Right cardiac atrium (tissue), 5 donors: ENCODE measurements at regions of chr16 and their contacts with region 1.

Region 1: GRCh38 chr16:82229796-82230619 is 60.0 kb upstream of the MPHOSPH6 start:
- DNase-seq: peak; percentile 65 to 78 (median 69)
- ATAC-seq: peak in 1 of 2 donors; percentile 69
- H3K4me3 ChIP-seq: no peak overlapping the region
- H3K27ac ChIP-seq: no peak overlapping the region
- H3K4me1 ChIP-seq: no peaks in the 10 kb centered on the region
- H3K27me3 ChIP-seq: no peaks in the 10 kb centered on the region

Region 2: GRCh38 chr16:81940781-81941560 is 289.0 kb before region 1 on chr16:
- intact Hi-C with region 1: loop called in 2 of 4 experiments (anchors 5 to 10 kb)
- DNase-seq: no peak
- ATAC-seq: peak in 1 of 2 donors; percentile 32
- H3K4me3 ChIP-seq: no peak overlapping the region
- H3K27ac ChIP-seq: no peak overlapping the region
- H3K4me1 ChIP-seq: no peaks in the 10 kb centered on the region
- H3K27me3 ChIP-seq: no peaks in the 10 kb centered on the region

Region 3: DNA sequence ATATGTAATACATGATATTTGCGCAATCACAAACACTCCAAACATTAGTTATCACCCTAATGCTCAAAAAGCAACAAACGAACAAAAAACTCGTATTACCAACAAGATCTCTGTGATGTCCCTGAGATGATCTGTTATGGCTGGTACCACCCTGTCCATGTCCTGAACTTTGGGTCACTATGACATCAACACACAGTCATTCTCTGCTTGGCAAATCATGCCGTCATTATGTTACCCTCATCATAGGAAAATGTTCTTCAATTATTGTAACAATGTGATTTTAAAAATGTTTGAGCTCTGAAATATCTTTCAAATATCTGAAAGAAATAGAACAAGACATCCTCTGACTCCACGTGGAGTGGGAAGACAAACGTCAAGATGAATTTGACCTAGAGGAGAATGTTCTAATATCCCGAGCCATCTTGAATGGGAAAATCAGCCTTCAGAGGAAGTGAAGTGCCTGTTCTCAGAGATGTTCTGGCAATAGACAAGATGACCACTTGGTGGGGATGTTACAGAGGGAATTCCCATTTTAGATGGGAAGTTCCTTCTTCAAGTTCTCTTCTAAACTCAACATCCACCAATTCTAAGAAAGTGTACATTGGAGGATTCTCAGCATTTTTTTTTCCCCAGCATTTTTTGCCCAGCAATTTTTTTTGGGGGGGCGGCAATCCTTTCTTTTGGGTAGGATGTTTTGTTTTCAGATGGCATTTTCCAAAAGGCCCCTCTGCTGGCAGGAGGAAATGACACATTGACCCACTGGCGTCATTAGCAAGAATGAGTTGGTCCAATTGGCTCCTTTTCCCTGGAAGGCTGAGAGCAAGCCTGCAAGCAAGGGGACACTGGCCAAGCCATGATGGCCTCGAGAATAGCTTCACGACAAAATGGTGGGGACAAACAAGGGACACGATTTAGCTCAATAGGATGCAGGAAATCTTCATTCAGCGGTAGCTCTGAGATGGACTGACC is 198.6 kb before region 1 on chr16:
- intact Hi-C with region 1: loop called in 2 of 4 experiments (anchors 2 to 5 kb)
- DNase-seq: no peak
- ATAC-seq: no peak
- H3K4me3 ChIP-seq: no peak overlapping the region
- H3K27ac ChIP-seq: no peak overlapping the region
- H3K4me1 ChIP-seq: no peaks in the 10 kb centered on the region
- H3K27me3 ChIP-seq: no peaks in the 10 kb centered on the region

Region 4: GRCh38 chr16:82111944-82112343 is 118.1 kb before region 1 on chr16:
- intact Hi-C with region 1: loop called in 1 of 4 experiments (anchors 10 kb)
- DNase-seq: no peak
- ATAC-seq: no peak
- H3K4me3 ChIP-seq: no peak overlapping the region
- H3K27ac ChIP-seq: no peak overlapping the region
- H3K4me1 ChIP-seq: no peaks in the 10 kb centered on the region
- H3K27me3 ChIP-seq: no peaks in the 10 kb centered on the region

Region 5: DNA sequence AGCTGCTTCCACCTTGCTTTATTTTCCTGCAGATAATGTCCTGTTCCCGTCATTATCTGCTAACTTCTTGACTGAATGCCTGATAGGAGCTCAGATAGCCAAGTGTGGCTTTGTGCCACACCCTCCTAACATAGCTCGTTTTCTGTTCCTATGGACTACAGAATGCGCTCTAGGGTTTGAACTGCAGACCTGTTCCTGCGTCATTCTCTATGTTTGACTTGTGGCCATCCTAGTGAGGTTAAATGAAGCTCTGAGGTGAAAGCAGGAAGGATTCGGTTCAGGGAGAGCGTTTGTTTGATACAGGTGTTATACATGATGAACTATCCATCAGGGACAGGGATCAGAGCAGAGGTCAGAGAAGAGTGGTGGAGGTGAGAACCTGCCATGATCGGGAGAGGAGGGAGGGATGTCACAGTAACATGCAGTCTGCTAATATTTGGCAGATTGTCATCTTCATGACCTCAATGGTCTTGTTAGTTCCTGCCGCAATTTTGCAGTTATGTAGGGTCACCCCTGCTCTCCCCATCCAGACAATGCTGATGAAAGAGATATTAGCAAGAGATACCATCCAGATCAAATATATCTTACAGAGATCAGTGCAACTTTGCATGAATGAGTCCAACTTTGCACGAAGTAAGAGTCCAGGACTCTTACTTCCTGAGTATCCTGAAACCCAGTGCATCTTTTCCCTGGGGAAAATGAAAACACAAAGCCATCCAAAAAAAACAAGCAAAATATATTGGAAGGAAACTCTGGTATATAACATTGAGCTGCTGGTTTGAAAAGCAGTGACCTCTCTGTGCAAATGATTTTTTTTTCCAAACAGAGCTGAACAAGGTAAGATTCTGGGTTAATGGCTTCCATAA is 92.8 kb before region 1 on chr16:
- intact Hi-C with region 1: no loop called
- DNase-seq: no peak
- ATAC-seq: no peak
- H3K4me3 ChIP-seq: no peak overlapping the region
- H3K27ac ChIP-seq: no peak overlapping the region
- H3K4me1 ChIP-seq: no peaks in the 10 kb centered on the region
- H3K27me3 ChIP-seq: no peaks in the 10 kb centered on the region

Region 6: GRCh38 chr16:82181456-82182185 is 48.4 kb before region 1 on chr16:
- intact Hi-C with region 1: no loop called
- DNase-seq: peak in 1 of 3 donors; percentile 39
- ATAC-seq: no peak
- H3K4me3 ChIP-seq: no peak overlapping the region
- H3K27ac ChIP-seq: no peak overlapping the region
- H3K4me1 ChIP-seq: no peaks in the 10 kb centered on the region
- H3K27me3 ChIP-seq: no peaks in the 10 kb centered on the region